ENCODE measurements at regions of chr19 and their contacts with region 1.

Region 1: GRCh38 chr19:36528194-36528920 is at the start of gene ZNF260:
- DNase-seq: peak; percentile 98
- total RNA-seq, gene ZNF260: 6.7 TPM

Region 2: GRCh38 chr19:36378625-36379509 is 149.5 kb before region 1 on chr19 and contains the start of gene ZFP14:
- intact Hi-C with region 1: loop called (anchors 2 kb)
- DNase-seq: peak; percentile 96
- total RNA-seq, gene ZFP14: 3.2 TPM

Region 3: DNA sequence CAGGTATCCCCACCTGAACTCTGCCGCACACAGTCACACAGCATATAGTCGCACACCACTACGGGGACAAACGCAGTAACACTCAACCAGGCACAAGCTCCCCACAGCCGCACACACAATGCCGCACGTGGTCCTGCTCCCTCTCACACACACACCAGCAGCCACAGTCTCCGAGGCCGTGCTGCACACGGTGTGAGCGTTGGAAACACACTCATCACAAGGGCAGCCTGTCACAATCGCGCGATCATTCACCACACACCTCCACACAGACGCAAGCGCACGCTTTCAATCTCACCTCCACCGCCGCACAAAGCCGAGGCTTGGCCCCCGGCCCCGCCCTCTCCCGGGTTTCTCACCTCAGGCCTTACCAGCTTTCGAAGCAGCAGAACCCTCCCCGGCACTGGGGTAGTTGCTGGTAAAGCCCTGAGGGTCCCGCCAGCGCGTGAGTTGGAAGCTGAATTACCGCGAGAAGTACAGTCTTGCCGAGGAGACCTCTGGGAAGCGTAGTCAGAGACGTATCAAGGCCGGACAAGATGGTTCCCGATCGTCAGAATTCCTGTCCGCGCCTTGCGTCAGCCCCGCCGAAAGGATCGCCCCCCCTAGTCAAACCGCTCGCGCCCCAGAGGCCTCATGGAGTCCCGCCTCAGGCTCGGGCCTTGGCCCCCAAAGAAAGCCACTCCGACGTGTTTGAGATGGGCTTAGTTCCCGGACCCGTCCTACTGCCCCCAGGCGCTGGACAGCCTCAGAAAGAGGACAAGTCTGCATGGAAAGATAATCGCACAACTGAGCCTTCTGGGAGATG is 39.0 kb before region 1 on chr19 and contains the start of gene ZNF566:
- intact Hi-C with region 1: loop called (anchors 1 kb)
- DNase-seq: peak; percentile 92
- total RNA-seq, gene ZNF566: 8.3 TPM

Region 4: GRCh38 chr19:36573020-36573885 is 44.9 kb after region 1 on chr19 and contains the start of gene ZNF529:
- intact Hi-C with region 1: loop called (anchors 1 kb)
- DNase-seq: peak; percentile 94
- total RNA-seq, gene ZNF529: 17.3 TPM